ENCODE measurements at regions of chr12 and their contacts with region 1.

Region 1: DNA sequence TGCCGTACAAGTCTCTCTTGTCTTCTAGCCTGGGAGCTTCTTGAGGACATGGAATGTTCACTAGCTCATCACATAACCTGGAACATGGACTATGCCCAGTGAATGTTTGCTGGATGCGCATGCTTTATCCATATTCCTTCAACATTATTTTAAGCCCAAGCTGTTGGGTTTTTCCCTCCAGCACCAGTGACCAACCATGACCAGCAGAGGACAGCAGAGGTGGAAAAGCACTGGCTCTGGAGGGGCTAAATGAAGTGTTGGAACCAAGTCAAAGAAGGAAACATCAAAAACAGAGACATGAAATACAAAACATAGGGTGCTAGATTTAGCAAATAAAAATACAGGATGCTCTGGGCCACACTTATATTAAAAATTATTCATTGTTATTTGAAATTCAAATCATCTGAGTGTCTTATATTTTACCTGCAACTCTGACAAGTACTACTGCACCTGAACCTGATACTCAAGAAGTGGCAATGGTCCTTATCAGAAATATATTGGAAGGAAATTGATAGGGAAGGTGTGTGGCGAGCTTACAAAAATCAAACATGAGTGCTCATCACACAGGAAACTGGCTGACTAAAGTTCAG is 23.1 kb upstream of the HELB start:
- DNase-seq: peak; percentile 61
- H3K4me3 Mint-ChIP-seq: no peak overlapping the region
- H3K27ac Mint-ChIP-seq: no peak overlapping the region
- H3K4me1 Mint-ChIP-seq: peaks cover 31% of the 10 kb centered on the region
- H3K27me3 Mint-ChIP-seq: no peaks in the 10 kb centered on the region

Region 2: GRCh38 chr12:66456612-66457011 is 177.4 kb after region 1 on chr12:
- CTCF ChIA-PET with region 1: no interaction called
- POLR2A ChIA-PET with region 1: no interaction called
- DNase-seq: no peak
- H3K4me3 Mint-ChIP-seq: no peak overlapping the region
- H3K27ac Mint-ChIP-seq: no peak overlapping the region
- H3K4me1 Mint-ChIP-seq: peaks cover 8% of the 10 kb centered on the region
- H3K27me3 Mint-ChIP-seq: no peaks in the 10 kb centered on the region

Region 3: DNA sequence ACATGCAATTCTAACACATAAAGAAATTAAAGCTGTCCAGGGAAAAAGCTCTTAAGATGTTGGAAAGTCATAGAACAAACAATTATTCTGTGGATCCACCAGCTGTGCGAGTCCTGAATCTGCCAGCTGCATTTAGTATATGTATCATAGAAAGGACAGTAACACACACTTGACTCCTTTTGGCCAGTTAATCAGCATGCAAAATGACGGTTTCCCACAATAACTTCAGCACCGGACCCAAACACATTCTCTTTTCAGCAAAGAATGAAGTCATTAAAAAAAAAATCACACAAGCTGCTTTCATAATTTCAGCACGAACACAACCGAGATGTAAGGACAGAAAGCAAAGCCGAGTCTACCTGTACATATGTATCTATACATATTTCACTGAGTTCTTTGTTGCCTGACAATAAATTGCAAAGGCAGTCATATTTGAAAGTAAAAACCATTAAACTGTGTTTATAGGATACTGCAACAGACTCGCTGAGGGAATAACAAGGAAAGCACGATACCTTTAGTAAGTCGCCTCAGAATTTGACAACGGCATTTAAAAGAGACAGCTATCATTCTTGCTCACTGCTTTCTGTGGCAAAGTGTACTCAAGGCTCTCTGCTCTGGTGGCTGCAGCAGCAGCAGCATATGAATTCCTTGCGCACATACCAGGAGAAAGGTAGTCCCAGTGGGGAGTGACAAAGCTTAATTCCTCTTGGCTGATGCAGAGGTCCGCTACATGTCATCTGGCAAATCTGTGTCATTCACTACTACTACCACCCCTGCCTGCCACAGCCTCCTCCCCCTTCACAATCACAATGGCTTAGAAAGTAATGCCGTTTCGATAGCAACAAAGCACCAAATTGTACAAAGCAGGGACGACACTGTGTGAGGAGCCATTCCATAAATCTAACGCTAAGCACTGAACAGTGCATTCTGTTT is 399.4 kb after region 1 on chr12 and contains the start of gene GRIP1:
- CTCF ChIA-PET with region 1: no interaction called
- POLR2A ChIA-PET with region 1: interaction called, 15 read pairs
- DNase-seq: no peak
- H3K4me3 Mint-ChIP-seq: no peak within 1 kb of the TSS
- H3K27ac Mint-ChIP-seq: no peak within 1 kb of the TSS
- H3K4me1 Mint-ChIP-seq: no peaks in the 10 kb centered on the region
- H3K27me3 Mint-ChIP-seq: peaks cover 15% of the 10 kb centered on the region
- total RNA-seq, gene GRIP1: 0.85 to 1.6 TPM